Spleen (tissue), 13 donors: ENCODE measurements at regions of chr9 and their contacts with region 1.

Region 1: GRCh38 chr9:104927912-104928740 is at the start of gene ABCA1:
- DNase-seq: peak; percentile 96
- H3K4me3 ChIP-seq: peak within 1 kb of the TSS; percentile 55 to 87 (median 74)
- H3K27ac ChIP-seq: peak within 1 kb of the TSS; percentile 54 to 90 (median 83)
- H3K4me1 ChIP-seq: peaks cover 4 to 63% (median 44%) of the 10 kb centered on the region in 6 donors
- H3K27me3 ChIP-seq: peaks cover 0 to 18% (median 0%) of the 10 kb centered on the region in 7 donors
- CTCF ChIP-seq: no peak
- POLR2A ChIP-seq: peak in 2 of 3 donors; percentile 18 to 66
- total RNA-seq, gene ABCA1: 55.0 to 78.4 (median 68.3) TPM

Region 2: DNA sequence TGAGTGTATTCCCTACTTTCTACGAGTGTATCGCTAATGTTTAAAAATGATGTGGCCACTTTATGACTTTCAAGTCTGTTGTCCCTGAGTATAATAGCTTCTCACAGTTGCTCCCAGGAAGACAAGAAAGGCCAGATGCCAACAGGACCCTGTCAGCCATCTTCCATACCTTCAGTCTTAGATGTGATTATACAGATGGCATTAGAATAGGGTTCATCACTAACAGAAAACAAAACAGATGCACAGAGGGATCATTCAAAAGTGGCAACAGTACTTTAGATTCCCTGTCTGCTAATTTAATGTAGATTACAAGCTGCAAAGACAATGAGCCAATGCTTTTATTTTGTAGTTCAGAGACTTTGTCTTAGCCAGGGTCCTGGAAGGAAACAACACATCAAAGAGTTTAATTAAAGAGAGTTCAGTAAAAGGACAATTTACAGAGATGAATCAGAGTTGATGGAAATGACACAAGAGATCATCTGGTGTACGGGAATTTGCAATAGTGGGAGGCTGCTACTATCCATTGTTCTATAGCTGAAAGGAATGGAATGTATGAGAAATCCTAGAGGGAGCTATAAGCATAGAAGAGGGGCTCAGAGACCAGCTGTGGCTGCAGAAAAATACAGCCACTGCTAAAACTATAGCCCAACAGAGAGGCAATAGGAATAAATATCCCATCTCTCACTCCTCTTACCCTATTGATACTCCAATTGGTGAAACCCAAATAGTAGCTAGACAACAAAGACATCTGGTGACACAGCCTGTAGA is 1227.7 kb before region 1 on chr9:
- intact Hi-C with region 1: no loop called
- DNase-seq: no peak
- H3K4me3 ChIP-seq: no peak overlapping the region
- H3K27ac ChIP-seq: no peak overlapping the region
- H3K4me1 ChIP-seq: no peaks in the 10 kb centered on the region
- H3K27me3 ChIP-seq: no peaks in the 10 kb centered on the region
- CTCF ChIP-seq: no peak
- POLR2A ChIP-seq: no peak

Region 3: DNA sequence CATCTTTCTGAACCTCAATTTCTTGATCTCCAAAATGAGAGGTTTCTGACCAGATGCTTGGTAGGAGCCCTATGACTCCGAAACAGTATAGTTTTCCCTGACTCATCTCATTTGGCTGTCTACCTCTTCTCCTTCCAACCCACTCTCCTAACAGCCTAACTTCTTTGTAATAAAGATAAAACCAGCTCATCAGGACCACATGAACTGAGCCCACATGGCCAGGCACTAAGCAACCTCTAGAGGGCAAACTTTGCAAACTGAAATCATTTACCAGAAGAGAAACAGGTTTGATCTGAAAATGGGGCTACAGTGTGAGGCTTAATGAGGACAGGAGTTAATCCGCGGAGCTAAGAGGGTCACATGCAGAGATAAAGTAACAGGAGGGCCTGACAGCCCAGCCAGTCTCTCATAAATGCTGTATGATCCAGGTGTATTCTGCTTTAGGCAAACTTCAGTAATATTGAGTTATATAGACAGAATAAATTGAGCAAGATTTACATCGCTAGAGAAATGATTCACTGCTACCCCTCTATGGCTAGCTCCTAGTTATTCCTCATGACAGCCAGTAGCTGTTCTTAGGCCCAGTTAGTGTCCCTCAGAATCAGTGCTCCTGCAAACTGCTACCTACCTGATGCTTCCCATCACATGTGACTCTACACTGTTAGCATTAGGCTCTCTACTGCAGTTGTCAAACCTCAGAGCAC is 64.8 kb before region 1 on chr9:
- intact Hi-C with region 1: loop called (anchors 10 kb)
- DNase-seq: no peak
- H3K4me3 ChIP-seq: no peak overlapping the region
- H3K27ac ChIP-seq: peak overlapping the region in 1 of 8 donors; percentile 6
- H3K4me1 ChIP-seq: peaks cover 0 to 89% (median 39%) of the 10 kb centered on the region in 6 donors
- H3K27me3 ChIP-seq: no peaks in the 10 kb centered on the region
- CTCF ChIP-seq: peak; percentile 61 to 88 (median 74)
- POLR2A ChIP-seq: no peak

Region 4: GRCh38 chr9:104968025-104968982 is 40.2 kb after region 1 on chr9:
- intact Hi-C with region 1: loop called (anchors 2 kb)
- DNase-seq: peak; percentile 97
- H3K4me3 ChIP-seq: peak overlapping the region; percentile 56 to 87 (median 64)
- H3K27ac ChIP-seq: peak overlapping the region; percentile 72 to 93 (median 86)
- H3K4me1 ChIP-seq: peaks cover 0 to 34% (median 15%) of the 10 kb centered on the region in 6 donors
- H3K27me3 ChIP-seq: no peaks in the 10 kb centered on the region
- CTCF ChIP-seq: peak in 1 of 11 experiments; percentile 11
- POLR2A ChIP-seq: peak in 1 of 3 donors; percentile 30

Region 5: GRCh38 chr9:105157130-105157583 is 229.0 kb after region 1 on chr9:
- intact Hi-C with region 1: loop called (anchors 10 kb)
- DNase-seq: peak; percentile 74
- H3K4me3 ChIP-seq: no peak overlapping the region
- H3K27ac ChIP-seq: no peak overlapping the region
- H3K4me1 ChIP-seq: peaks cover 0 to 30% (median 8%) of the 10 kb centered on the region in 6 donors
- H3K27me3 ChIP-seq: no peaks in the 10 kb centered on the region
- CTCF ChIP-seq: peak; percentile 21 to 68 (median 56)
- POLR2A ChIP-seq: no peak

Region 6: DNA sequence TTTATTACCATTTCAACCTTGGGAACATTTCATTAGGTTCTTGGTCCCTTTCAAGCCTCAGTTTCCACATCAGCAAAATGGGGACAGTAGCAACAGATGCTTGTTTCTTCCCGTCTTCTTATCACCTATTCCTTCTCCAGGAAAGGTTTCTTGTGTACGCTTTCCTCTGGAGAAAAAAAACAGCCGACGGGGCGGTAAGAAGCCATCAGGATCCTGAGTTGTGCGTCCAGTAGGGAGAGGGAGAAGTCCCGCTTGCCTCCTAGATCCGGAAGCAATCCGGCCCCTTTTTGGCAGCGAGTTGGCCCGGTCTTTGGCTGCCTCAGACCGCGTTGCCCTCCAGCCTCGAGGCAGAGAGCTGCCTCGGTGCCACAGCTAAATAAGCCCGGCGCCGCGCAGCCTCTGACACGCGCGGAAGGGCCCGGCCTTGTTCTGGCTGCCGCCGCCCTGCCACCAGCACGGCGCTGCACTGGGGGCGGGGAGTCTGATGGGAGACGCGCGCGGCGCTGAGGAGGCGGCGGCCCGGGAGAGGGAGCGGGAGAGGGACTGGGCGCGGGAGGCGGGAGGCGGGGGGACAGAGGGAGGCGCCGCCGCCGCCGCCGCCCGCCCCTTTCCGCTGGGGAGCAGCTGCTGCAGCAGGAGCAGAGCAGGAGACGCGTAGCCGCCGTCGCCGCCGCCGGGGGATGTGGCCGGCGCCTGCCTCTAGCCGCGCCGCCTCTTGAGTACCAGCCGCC is 316.0 kb after region 1 on chr9 and contains the start of gene SLC44A1:
- intact Hi-C with region 1: loop called (anchors 10 kb)
- DNase-seq: peak; percentile 99
- H3K4me3 ChIP-seq: peak within 1 kb of the TSS; percentile 59 to 94 (median 90)
- H3K27ac ChIP-seq: peak within 1 kb of the TSS; percentile 75 to 87 (median 83)
- H3K4me1 ChIP-seq: peaks cover 10 to 58% (median 32%) of the 10 kb centered on the region in 6 donors
- H3K27me3 ChIP-seq: peaks cover 0 to 5% (median 0%) of the 10 kb centered on the region in 7 donors
- CTCF ChIP-seq: peak in 3 of 11 experiments; percentile 19 to 31 (median 29)
- POLR2A ChIP-seq: peak in 2 of 3 donors; percentile 51 to 70
- total RNA-seq, gene SLC44A1: 17.9 to 27.5 (median 24.0) TPM

Region 7: DNA sequence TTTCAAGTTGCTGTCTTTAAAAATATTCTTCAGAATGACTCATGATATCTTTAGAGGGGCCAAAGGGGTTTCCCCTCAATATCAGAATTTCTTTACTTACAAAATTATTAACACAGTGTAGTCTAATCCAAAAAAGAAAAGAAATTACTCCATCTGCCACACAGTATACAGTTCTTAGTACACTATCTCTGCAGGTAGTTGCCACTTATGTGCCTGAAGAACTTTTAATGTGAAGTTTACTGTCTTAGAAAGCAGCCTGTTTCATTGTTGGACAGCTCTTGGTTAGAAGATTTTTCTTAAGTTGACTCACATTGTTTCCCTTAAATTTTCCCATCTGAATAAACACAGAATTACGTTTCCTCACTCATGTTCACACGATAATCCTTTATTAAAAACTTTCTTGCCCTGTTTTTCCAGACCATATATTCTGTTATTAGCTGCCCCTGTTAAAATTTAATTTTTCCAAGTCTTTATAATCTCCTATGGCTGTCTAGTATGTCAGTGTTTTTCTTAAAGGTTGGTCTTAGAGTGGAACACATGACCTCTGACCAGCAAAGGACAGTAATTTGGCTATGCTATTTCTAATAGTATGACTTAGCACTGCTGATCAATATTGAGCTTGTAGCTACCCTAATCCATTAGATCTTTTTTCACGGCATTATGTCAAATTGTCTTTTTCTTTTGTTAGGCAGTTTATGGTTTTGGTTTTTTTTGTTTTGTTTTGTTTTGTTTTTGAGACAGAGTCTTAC is 608.0 kb after region 1 on chr9:
- intact Hi-C with region 1: no loop called
- DNase-seq: no peak
- H3K4me3 ChIP-seq: no peak overlapping the region
- H3K27ac ChIP-seq: no peak overlapping the region
- H3K4me1 ChIP-seq: no peaks in the 10 kb centered on the region
- H3K27me3 ChIP-seq: no peaks in the 10 kb centered on the region
- CTCF ChIP-seq: no peak
- POLR2A ChIP-seq: no peak